Transverse colon (tissue), 4 donors: ENCODE measurements at regions of chrX and their contacts with region 1.

Region 1: DNA sequence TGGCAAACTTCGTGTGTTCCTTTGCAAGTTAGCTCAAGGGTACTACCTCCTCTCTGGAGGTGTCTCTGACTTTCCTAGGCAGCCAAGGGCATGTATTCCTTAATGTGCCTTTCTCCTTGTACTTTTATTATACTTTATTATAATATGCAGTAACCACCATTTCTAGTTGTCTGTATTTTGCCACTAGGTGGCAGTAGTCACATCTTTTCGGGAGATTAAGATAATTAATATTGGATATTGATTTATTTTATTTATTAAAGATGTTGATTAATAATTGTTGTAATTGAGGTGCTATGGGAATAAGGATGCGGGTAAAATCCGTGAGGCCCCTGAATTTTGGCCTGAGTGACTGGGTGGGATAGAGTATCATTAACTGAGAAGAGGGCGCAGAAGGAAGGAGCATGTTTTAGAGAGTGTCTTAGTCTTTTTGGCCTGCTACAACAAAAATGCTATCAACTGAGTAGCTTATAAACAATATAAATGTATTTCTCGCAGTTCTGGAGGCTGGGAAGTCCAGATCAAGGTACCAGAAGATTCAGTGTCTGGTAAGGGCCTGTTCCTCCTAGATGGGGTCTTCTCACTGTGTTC is 153.3 kb downstream of the TMEM164 start:
- DNase-seq: no peak
- H3K4me3 ChIP-seq: no peak overlapping the region
- H3K27ac ChIP-seq: no peak overlapping the region
- H3K4me1 ChIP-seq: no peaks in the 10 kb centered on the region
- H3K27me3 ChIP-seq: no peaks in the 10 kb centered on the region
- CTCF ChIP-seq: peak; percentile 21 to 64 (median 40)
- EP300 ChIP-seq: no peak
- POLR2A ChIP-seq: no peak

Region 2: GRCh38 chrX:110226931-110227330 is 70.7 kb after region 1 on chrX:
- in situ Hi-C with region 1: no loop called
- intact Hi-C with region 1: no loop called
- DNase-seq: no peak
- H3K4me3 ChIP-seq: no peak overlapping the region
- H3K27ac ChIP-seq: no peak overlapping the region
- H3K4me1 ChIP-seq: no peaks in the 10 kb centered on the region
- H3K27me3 ChIP-seq: no peaks in the 10 kb centered on the region
- CTCF ChIP-seq: no peak
- EP300 ChIP-seq: no peak
- POLR2A ChIP-seq: no peak

Region 3: GRCh38 chrX:110407910-110408545 is 251.8 kb after region 1 on chrX:
- in situ Hi-C with region 1: loop called (anchors 5 to 10 kb)
- intact Hi-C with region 1: loop called (anchors 2 kb)
- DNase-seq: peak; percentile 28
- H3K4me3 ChIP-seq: no peak overlapping the region
- H3K27ac ChIP-seq: no peak overlapping the region
- H3K4me1 ChIP-seq: no peaks in the 10 kb centered on the region
- H3K27me3 ChIP-seq: no peaks in the 10 kb centered on the region
- CTCF ChIP-seq: peak; percentile 58 to 67 (median 64)
- EP300 ChIP-seq: no peak
- POLR2A ChIP-seq: no peak

Region 4: DNA sequence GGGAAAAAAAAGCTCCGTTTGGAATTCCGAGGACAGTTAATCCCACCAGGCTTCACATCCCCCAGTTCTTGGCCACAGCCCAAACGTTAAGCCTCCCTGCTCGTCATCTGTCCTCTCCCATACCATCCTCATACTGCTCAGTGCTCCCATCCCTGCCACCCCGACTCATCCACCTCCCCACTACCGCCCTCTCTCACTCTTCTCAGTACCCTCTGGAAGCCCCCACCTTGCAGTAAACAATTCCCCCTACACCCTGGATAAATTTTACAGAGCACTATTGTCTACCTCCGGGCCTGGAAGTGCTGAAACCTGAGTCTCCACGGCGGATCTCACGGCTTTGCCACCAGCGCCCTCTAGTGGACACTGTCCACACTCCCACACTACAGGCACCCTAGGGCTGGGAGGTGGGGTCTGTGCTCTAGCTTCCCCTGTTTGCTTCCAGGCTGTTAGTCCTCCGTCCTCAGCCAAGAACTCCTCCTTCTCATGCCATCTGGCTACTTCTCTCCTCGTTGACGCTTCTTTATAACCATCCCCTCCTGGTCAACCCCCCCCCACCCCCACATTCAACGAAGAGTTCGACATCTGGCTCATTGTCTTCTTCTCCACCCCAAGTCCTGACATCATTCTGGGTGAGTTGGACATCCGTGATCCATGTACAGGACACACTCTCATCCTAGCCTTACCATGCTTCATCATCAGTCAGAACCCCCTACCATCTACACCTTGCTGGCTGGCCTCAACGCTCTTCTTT is 256.9 kb after region 1 on chrX:
- in situ Hi-C with region 1: loop called (anchors 5 to 10 kb)
- intact Hi-C with region 1: no loop called
- DNase-seq: peak; percentile 69
- H3K4me3 ChIP-seq: no peak overlapping the region
- H3K27ac ChIP-seq: no peak overlapping the region
- H3K4me1 ChIP-seq: no peaks in the 10 kb centered on the region
- H3K27me3 ChIP-seq: no peaks in the 10 kb centered on the region
- CTCF ChIP-seq: peak; percentile 58 to 85 (median 71)
- EP300 ChIP-seq: no peak
- POLR2A ChIP-seq: no peak